Naive thymus-derived CD4-positive, alpha-beta T cell (primary cell): ENCODE measurements at regions of chr5 and their contacts with region 1.

Region 1: GRCh38 chr5:140302786-140303639 is at the start of gene PFDN1:
- DNase-seq: peak; percentile 79 to 94 (median 89)
- ATAC-seq: peak; percentile 99
- H3K4me3 ChIP-seq: peak within 1 kb of the TSS; percentile 90
- H3K4me3 Mint-ChIP-seq: peak within 1 kb of the TSS; percentile 92 to 100 (median 98)
- H3K27ac ChIP-seq: peak within 1 kb of the TSS; percentile 91
- H3K27ac Mint-ChIP-seq: peak within 1 kb of the TSS; percentile 95 to 100 (median 98)
- H3K4me1 ChIP-seq: peaks cover 10 to 11% of the 10 kb centered on the region in 2 donors
- H3K4me1 Mint-ChIP-seq: peaks cover 4 to 39% (median 33%) of the 10 kb centered on the region in 7 donors
- H3K27me3 ChIP-seq: no peaks in the 10 kb centered on the region
- H3K27me3 Mint-ChIP-seq: peaks cover 0 to 9% (median 5%) of the 10 kb centered on the region in 5 donors
- total RNA-seq, gene PFDN1: 24.8 to 52.7 (median 28.2) TPM

Region 2: GRCh38 chr5:140244525-140245025 is 58.4 kb before region 1 on chr5:
- CTCF ChIA-PET with region 1: no interaction called
- POLR2A ChIA-PET with region 1: interaction called, 3 read pairs
- intact Hi-C with region 1: loop called in 1 of 2 experiments (anchors 2 kb)
- DNase-seq: peak; percentile 62 to 82 (median 74)
- ATAC-seq: peak; percentile 87
- H3K4me3 ChIP-seq: no peak overlapping the region
- H3K4me3 Mint-ChIP-seq: peak overlapping the region in 6 of 10 donors; percentile 0 to 55 (median 44)
- H3K27ac ChIP-seq: no peak overlapping the region
- H3K27ac Mint-ChIP-seq: peak overlapping the region in 8 of 9 donors; percentile 41 to 94 (median 77)
- H3K4me1 ChIP-seq: peaks cover 0 to 14% of the 10 kb centered on the region in 2 donors
- H3K4me1 Mint-ChIP-seq: peaks cover 5 to 43% (median 27%) of the 10 kb centered on the region in 7 donors
- H3K27me3 ChIP-seq: no peaks in the 10 kb centered on the region
- H3K27me3 Mint-ChIP-seq: no peaks in the 10 kb centered on the region

Region 3: DNA sequence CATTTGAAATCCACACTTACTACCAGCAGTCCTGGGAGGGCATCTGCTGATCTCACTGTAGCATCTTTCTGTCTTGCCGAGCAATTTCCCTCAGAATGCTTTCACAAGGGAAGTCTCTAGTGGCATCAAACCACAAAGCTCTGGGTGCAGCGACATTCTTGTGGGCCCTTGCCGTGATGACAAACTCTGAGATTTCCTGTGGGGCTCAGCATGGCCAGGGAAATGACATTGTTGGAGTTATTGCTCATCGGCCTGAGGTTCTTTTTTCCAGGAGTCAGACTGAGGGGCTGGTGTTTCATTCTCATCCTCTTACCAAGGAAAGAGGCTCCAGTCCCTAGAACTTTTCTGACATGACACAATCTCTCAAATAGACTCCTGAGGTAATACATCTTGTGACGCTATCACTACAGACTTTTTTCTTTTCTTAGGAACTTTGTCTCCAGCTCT is 51.5 kb before region 1 on chr5:
- CTCF ChIA-PET with region 1: no interaction called
- POLR2A ChIA-PET with region 1: interaction called, 4 read pairs
- intact Hi-C with region 1: loop called in 1 of 2 experiments (anchors 2 kb)
- DNase-seq: peak in 8 of 9 donors; percentile 24 to 70 (median 38)
- ATAC-seq: peak; percentile 89
- H3K4me3 ChIP-seq: no peak overlapping the region
- H3K4me3 Mint-ChIP-seq: peak overlapping the region in 8 of 10 donors; percentile 9 to 64 (median 36)
- H3K27ac ChIP-seq: peak overlapping the region; percentile 47
- H3K27ac Mint-ChIP-seq: peak overlapping the region; percentile 57 to 95 (median 78)
- H3K4me1 ChIP-seq: peaks cover 8 to 20% of the 10 kb centered on the region in 2 donors
- H3K4me1 Mint-ChIP-seq: peaks cover 27 to 54% (median 36%) of the 10 kb centered on the region in 7 donors
- H3K27me3 ChIP-seq: no peaks in the 10 kb centered on the region
- H3K27me3 Mint-ChIP-seq: no peaks in the 10 kb centered on the region

Region 4: GRCh38 chr5:140267559-140268018 is 35.4 kb before region 1 on chr5:
- CTCF ChIA-PET with region 1: no interaction called
- POLR2A ChIA-PET with region 1: interaction called, 4 read pairs
- intact Hi-C with region 1: loop called in 1 of 2 experiments (anchors 2 kb)
- DNase-seq: peak in 1 of 9 donors; percentile 3
- ATAC-seq: peak; percentile 24
- H3K4me3 ChIP-seq: no peak overlapping the region
- H3K4me3 Mint-ChIP-seq: peak overlapping the region; percentile 26 to 78 (median 64)
- H3K27ac ChIP-seq: peak overlapping the region; percentile 57
- H3K27ac Mint-ChIP-seq: peak overlapping the region; percentile 64 to 85 (median 76)
- H3K4me1 ChIP-seq: peaks cover 0 to 24% of the 10 kb centered on the region in 2 donors
- H3K4me1 Mint-ChIP-seq: peaks cover 25 to 51% (median 38%) of the 10 kb centered on the region in 7 donors
- H3K27me3 ChIP-seq: no peaks in the 10 kb centered on the region
- H3K27me3 Mint-ChIP-seq: no peaks in the 10 kb centered on the region

Region 5: DNA sequence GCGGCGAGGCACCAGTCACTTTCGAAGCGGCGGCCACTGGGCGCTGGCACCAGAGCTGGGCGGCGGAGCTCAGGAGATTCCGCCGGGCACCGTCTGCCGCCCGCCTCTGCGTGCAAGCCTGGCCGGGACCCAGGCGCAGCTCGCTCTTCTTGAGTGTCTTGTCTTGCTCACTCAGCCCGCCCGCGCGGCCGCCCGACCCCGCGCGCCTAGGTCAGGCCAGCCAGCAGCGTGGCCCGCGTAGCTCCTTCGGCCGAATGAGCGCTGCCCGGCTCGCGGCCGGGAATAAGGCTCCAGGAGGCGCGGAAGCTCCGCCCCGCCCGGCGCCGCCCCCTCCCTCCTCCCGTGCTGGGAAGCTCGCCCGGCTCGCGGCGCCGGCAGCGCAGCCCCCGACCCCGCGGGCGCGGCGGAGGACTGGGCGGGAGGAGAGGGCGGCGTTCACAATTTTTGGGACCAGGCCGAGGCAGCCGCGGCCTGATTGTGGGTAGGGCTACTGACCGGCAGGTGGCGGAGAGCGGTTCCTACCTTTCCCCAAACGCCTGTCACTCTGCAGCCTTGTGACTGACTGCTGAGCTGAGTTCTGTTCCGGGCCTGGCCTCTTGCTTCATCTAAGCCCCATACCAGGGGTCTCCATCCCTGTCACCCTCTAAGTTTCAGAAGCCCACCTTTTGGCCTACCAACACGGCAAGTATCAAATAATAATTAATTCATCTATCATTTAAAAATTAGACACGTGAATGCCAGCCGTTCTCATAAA is 43.5 kb after region 1 on chr5 and contains the start of gene HBEGF:
- CTCF ChIA-PET with region 1: interaction called, 6 read pairs
- POLR2A ChIA-PET with region 1: interaction called, 3 read pairs
- intact Hi-C with region 1: loop called (anchors 1 kb)
- DNase-seq: peak; percentile 19 to 74 (median 42)
- ATAC-seq: peak; percentile 73
- H3K4me3 ChIP-seq: peak within 1 kb of the TSS; percentile 49
- H3K4me3 Mint-ChIP-seq: peak within 1 kb of the TSS; percentile 73 to 91 (median 84)
- H3K27ac ChIP-seq: peak within 1 kb of the TSS; percentile 57
- H3K27ac Mint-ChIP-seq: peak within 1 kb of the TSS in 8 of 9 donors; percentile 33 to 94 (median 62)
- H3K4me1 ChIP-seq: peaks cover 10 to 40% of the 10 kb centered on the region in 2 donors
- H3K4me1 Mint-ChIP-seq: peaks cover 33 to 68% (median 52%) of the 10 kb centered on the region in 7 donors
- H3K27me3 ChIP-seq: no peaks in the 10 kb centered on the region
- H3K27me3 Mint-ChIP-seq: peaks cover 0 to 17% (median 5%) of the 10 kb centered on the region in 5 donors
- total RNA-seq, gene HBEGF: 0.35 to 95.5 (median 11.6) TPM

Region 6: DNA sequence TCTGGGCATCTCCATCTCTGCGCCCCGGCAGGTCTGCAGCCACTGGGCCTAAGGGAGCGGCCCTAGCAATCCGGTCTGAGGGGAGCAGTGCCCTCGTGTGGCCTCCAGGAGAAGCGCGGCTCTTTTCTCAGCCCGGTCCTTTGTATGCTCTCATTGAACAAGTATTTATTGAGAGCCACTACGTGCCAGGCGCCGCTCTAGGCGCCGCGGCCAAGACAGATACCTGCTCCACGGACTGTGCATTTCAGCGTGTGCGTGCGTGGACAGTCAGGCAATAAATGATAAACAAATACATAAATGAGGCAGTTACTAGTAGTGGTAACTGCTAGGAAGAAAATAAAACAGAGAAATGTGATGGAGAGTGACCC is 54.7 kb after region 1 on chr5:
- CTCF ChIA-PET with region 1: interaction called, 5 read pairs
- POLR2A ChIA-PET with region 1: no interaction called
- intact Hi-C with region 1: loop called in 1 of 2 experiments (anchors 1 kb)
- DNase-seq: peak; percentile 42 to 73 (median 61)
- ATAC-seq: peak; percentile 97
- H3K4me3 ChIP-seq: peak overlapping the region; percentile 36
- H3K4me3 Mint-ChIP-seq: peak overlapping the region in 9 of 10 donors; percentile 41 to 80 (median 59)
- H3K27ac ChIP-seq: no peak overlapping the region
- H3K27ac Mint-ChIP-seq: peak overlapping the region in 3 of 9 donors; percentile 20 to 47 (median 46)
- H3K4me1 ChIP-seq: peaks cover 8% of the 10 kb centered on the region in 2 donors
- H3K4me1 Mint-ChIP-seq: peaks cover 7 to 18% (median 8%) of the 10 kb centered on the region in 7 donors
- H3K27me3 ChIP-seq: no peaks in the 10 kb centered on the region
- H3K27me3 Mint-ChIP-seq: peaks cover 0 to 10% (median 0%) of the 10 kb centered on the region in 5 donors

Region 7: DNA sequence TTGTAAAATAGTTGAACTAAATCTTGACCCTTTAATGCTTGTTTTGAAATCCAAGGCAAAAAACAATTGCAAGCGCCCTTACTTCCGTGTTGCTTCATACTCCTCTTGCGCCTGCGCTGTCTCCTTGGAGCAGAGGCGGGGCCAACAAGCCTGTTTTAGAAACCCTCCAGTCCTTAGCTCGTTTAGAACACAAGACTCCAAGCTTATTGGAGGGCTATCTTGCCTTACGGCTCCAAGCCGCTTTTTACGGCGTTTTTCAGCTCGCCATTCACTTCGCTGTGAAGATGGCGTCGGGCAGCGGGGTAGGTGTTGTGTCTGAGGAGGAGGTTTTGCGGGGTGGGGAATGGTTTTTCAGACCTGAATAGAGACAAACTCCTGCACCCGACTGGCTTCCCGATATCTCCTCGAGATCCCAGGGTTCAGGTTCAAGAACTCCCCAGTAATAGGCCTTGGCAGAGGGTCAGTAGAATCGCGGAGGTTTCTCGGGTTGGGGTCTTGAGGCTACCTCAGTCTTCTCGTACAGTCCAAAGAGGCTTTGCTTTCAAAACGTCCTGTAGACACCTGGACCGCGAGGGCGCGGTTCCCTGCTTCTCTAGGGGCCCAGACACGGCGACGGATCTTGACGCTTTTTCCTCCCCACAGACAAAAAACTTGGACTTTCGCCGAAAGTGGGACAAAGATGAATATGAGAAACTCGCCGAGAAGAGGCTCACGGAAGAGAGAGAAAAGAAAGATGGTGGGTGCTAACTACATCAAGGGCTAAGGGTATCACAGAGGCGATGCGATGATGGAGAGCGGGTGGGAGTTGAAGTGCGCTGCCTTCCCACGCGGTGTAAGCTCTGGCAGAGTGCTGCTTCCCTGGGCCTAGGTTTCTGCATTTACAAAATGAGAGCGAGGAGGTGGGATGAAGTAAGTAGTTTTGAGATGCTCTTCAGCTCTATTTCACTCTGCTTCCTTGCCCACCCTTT is 397.4 kb after region 1 on chr5 and contains the start of gene ZMAT2:
- CTCF ChIA-PET with region 1: no interaction called
- POLR2A ChIA-PET with region 1: no interaction called
- intact Hi-C with region 1: loop called in 1 of 2 experiments (anchors 1 kb)
- DNase-seq: peak; percentile 74 to 97 (median 92)
- ATAC-seq: peak; percentile 100
- H3K4me3 ChIP-seq: peak within 1 kb of the TSS; percentile 78
- H3K4me3 Mint-ChIP-seq: peak within 1 kb of the TSS; percentile 93 to 100 (median 98)
- H3K27ac ChIP-seq: peak within 1 kb of the TSS; percentile 87
- H3K27ac Mint-ChIP-seq: peak within 1 kb of the TSS; percentile 90 to 99 (median 97)
- H3K4me1 ChIP-seq: peaks cover 4 to 14% of the 10 kb centered on the region in 2 donors
- H3K4me1 Mint-ChIP-seq: peaks cover 18 to 35% (median 29%) of the 10 kb centered on the region in 7 donors
- H3K27me3 ChIP-seq: no peaks in the 10 kb centered on the region
- H3K27me3 Mint-ChIP-seq: no peaks in the 10 kb centered on the region
- total RNA-seq, gene ZMAT2: 37.7 to 63.0 (median 55.1) TPM